Posterior vena cava (tissue), 2 donors: ENCODE measurements at regions of chr19 and their contacts with region 1.

Region 1: GRCh38 chr19:11496391-11497163 is 9.1 kb downstream of the ZNF653 start:
- DNase-seq: peak; percentile 93

Region 2: GRCh38 chr19:11478167-11479089 is 18.1 kb before region 1 on chr19:
- intact Hi-C with region 1: no loop called
- DNase-seq: no peak

Region 3: DNA sequence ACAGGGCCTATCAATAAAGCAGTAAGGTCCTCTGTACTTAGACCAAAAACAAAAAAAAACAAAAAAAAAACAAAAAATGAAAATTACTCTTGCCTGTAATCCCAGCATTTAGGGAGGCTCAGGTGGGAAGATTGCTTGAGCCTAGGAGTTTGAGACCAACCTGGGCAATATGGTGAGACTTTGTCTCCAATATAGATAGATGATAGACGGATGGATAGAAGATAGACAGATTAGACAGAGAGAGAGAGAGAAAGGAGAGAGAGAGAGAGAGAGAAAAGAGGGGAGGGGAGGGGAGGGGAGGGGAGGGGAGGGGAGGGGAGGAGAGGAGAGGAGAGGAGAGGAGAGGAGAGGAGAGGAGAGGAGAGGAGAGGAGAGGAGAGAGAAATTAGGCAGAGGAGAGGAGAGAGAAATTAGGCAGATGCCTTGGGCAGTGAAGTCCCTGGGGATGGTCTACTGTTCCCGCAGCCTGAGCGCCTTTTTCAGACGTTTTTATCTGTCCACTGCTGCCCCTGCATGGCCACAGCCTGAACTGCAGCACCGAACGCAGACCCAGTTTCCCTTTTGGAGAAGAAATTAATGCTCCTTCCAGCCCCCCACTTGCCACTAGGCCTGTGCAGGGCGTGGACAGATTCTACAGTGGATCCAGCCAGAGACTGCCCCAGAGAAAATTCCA is 90.9 kb after region 1 on chr19:
- intact Hi-C with region 1: loop called in 1 of 2 experiments (anchors 2 kb)
- DNase-seq: peak; percentile 92